ENCODE measurements at regions of chr13 and their contacts with region 1.

Region 1: GRCh38 chr13:24228852-24229458 is 68.4 kb downstream of the SPATA13 start:
- DNase-seq: no peak
- H3K4me3 ChIP-seq: no peak overlapping the region
- CTCF ChIP-seq: peak; percentile 81

Region 2: DNA sequence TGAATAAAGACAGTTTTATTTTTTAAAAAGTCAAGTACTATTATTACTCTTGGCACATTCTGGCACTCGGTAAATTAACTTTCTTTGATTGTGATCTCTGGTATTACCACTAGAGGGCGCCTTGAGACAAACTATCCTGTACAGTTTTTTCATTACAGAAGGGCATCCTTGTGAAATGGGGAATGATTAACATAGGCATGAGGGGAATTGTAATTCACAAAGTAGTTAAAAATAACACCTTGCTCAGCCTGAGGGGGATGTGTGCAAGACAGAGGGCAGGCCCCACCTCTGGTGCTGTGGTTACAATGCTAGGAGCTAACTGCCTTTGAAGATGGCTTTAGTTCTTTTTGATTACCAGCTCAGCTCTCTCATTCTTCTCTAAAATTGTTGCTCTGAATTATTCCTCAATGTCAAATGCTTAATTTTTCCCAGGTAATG is 307.5 kb before region 1 on chr13:
- CTCF ChIA-PET with region 1: interaction called, 39 read pairs
- POLR2A ChIA-PET with region 1: no interaction called
- DNase-seq: no peak
- H3K4me3 ChIP-seq: no peak overlapping the region
- CTCF ChIP-seq: peak; percentile 37

Region 3: DNA sequence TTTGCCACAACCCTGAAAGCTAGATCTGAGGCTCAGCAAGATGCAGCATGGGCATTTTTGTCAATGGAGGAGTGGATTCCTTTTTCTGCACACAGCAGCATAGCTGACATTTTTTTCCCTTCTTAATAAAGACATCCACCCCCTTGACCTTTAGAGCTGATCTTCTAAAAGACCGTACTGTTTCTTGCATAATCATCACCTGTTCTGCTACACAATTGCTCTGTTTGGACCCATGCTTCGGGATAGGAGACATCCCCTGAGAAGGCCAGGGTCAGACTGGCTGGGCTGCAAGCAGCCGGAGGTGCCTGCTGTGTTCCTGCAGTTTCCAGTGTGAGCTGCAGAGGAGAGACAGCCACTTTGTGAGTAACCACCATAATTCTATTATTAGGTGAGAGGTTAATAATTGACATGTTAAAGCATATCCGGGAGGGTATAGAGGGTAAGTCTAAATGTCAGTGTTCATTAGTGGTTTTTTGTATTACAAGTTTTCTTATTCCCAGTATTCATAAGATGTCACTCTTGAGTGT is 223.1 kb before region 1 on chr13:
- CTCF ChIA-PET with region 1: interaction called, 22 read pairs
- POLR2A ChIA-PET with region 1: no interaction called
- DNase-seq: no peak
- H3K4me3 ChIP-seq: no peak overlapping the region
- CTCF ChIP-seq: no peak

Region 4: DNA sequence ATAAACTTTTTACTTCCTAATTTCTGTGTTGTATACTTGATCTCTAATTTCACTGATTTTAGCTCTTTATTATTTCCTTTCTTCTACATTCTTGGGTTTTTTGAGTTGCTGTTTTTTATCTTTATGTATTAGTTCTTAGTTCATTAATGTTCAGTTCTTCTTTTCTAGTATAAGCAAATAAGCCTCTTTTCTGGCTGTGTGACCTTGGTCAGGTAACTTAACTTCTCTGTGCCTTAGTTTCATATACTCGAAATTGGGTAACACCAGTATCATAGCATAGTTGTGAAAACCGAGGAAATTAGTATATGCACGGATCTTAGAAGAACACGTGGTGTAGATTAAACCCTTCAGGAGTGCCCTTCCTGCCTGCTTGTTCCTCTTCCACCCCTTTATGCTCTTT is 201.5 kb before region 1 on chr13:
- CTCF ChIA-PET with region 1: interaction called, 438 read pairs
- POLR2A ChIA-PET with region 1: no interaction called
- DNase-seq: no peak
- H3K4me3 ChIP-seq: no peak overlapping the region
- CTCF ChIP-seq: no peak

Region 5: GRCh38 chr13:24033527-24034302 is 195.2 kb before region 1 on chr13:
- CTCF ChIA-PET with region 1: interaction called, 12 read pairs
- POLR2A ChIA-PET with region 1: no interaction called
- DNase-seq: peak; percentile 72
- H3K4me3 ChIP-seq: no peak overlapping the region
- CTCF ChIP-seq: no peak

Region 6: DNA sequence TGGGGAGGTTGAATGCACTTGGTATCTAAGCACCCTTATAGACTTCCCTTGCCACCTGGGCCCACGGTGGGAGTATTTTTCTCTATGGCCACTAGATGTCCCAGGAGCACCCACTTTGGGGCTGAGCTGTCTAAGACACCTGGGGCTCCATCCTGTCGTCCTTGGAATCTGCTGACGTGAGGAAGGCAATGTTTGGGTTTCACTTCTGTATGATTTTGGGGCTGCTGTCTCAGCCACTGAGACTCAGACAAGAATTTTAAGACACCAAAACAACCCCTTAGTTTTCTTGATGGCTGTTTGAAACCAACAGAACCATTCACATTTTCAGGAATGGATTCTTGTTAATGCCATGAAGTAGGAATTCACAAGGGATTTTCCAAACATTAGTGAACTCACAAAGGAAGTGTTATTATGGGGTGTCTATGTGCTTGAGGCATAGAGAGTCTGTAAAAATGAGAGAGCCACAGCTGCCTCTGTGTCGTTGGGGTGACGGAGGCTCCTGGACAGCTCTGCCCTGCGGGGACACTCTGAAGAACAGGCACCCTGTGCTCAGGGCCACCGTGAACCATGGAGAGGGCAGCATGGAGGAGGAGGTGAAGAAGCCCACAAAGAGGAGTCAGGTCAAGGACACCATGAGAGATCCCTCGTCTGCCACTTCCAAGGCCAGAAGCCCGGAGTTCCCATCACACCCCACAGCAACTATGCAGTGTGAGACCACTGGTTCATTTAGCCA is 175.3 kb before region 1 on chr13:
- CTCF ChIA-PET with region 1: interaction called, 15 read pairs
- POLR2A ChIA-PET with region 1: no interaction called
- DNase-seq: no peak
- H3K4me3 ChIP-seq: no peak overlapping the region
- CTCF ChIP-seq: peak; percentile 74

Region 7: GRCh38 chr13:24127038-24127643 is 101.8 kb before region 1 on chr13:
- CTCF ChIA-PET with region 1: no interaction called
- POLR2A ChIA-PET with region 1: no interaction called
- DNase-seq: no peak
- H3K4me3 ChIP-seq: no peak overlapping the region
- CTCF ChIP-seq: no peak

Region 8: GRCh38 chr13:24241336-24241735 is 12.4 kb after region 1 on chr13:
- CTCF ChIA-PET with region 1: interaction called, 28 read pairs
- POLR2A ChIA-PET with region 1: no interaction called
- DNase-seq: no peak
- H3K4me3 ChIP-seq: no peak overlapping the region
- CTCF ChIP-seq: no peak